GM13976 (cell line): ENCODE measurements at regions of chr4 and their contacts with region 1.

Region 1: DNA sequence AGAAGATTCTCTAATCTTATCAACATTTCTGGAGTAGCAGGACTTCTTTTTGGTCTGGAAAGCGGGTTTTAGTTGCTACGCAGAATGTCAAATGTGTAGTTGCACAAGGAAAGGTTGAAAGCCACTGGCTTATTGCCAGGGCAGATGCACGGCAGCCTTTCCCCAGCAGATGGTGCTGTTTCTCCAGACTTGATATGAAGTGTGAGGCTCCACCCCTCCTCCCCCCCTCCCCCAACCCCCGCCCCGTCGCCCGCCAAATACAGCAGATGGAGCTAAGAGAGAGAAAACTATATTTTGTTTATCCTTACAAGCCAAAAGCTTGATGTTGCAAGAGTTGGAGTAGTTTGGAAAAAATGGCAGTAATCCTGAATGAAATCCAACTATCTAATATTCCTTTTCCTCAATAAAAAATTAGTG is 32.0 kb downstream of the ENOPH1 start:
- DNase-seq: peak; percentile 78
- CTCF ChIP-seq: peak; percentile 84

Region 2: GRCh38 chr4:82223715-82224114 is 238.7 kb before region 1 on chr4:
- in situ Hi-C with region 1: no loop called
- DNase-seq: no peak
- CTCF ChIP-seq: no peak

Region 3: DNA sequence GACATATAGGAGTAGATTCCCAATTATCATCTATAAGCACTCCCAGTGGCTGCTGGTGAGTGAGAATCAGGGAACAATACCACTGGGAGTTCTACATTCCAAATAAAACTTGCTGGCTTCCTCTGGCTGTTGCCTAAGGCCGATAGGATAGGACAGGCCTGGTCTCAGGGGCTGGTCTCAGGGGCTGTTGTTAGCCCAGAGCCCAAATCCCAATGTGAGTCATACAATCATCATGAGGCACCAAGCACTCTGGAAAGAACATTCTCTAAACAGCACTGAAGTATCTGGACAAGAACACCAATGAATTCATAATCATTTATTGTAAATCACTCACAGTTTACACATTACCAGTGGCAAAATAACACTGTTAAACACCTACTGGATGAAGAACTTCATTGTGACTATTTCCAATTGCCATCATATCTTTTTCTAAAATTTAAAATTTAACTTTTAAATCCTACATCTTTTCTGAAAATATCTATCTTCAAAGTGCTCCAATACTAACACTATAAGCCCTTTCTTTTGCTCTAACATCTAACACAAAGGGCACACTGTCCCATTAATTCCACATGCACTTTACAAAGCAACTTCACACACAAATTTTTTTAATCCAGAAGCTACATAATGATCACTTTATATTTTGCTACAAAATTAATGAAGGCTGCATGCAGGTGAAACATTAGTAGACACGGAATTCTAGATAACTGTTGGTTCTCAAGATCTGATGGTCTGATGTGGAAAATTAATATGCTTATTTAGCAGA is 167.0 kb after region 1 on chr4:
- in situ Hi-C with region 1: no loop called
- DNase-seq: no peak
- CTCF ChIP-seq: no peak

Region 4: DNA sequence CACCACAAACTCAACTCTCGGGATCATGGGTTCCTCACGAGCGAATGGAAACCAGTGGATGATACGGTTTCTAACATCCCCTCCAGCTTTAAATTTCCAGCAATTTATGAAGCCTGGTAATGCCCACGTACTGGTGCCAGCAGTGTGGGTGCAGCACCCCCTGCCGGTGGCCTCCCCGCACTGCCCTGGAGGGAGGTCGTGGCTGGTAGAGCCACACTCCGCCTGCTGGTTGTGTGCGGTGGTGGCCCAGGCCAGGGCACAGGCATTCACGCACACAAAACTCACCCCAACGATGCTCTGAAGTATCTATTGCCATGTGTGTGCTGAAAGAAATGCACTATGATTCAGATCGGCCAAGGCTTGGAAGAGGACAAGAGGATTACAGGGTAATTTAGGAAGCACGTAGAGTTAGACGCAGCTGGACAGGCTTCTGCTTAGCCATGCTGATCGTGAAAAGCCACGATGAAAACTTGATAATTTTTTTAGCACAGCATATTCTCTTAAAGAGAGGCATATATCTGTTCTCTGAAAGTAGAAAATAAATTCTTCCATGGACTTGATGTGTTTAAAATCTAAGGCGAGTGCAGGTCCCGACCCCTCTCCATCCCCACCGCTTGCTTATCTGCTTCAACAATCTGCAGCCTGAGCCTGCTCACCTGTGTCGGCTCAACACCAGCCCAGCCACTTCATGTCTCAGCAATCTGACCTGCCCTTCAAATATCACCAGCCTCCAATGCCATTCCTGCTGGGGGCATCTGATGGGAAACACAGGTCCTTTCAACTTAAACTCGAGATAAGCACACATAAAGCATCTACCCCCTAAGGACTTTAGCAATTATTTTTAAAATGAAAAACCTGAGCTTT is 277.1 kb after region 1 on chr4:
- in situ Hi-C with region 1: loop called (anchors 10 kb)
- DNase-seq: peak; percentile 81
- CTCF ChIP-seq: peak; percentile 87

Region 5: GRCh38 chr4:83012687-83013419 is 550.4 kb after region 1 on chr4:
- in situ Hi-C with region 1: loop called (anchors 25 kb)
- DNase-seq: peak; percentile 98
- CTCF ChIP-seq: peak; percentile 21